SK-N-SH (cell line): ENCODE measurements at regions of chr1 and their contacts with region 1.

Region 1: GRCh38 chr1:110053557-110054428 is 16.7 kb downstream of the ALX3 start:
- DNase-seq: peak; percentile 71
- H3K4me3 ChIP-seq: no peak overlapping the region; a peak in 1 of 4 replicates
- H3K27ac ChIP-seq: peak overlapping the region in 1 of 2 experiments; percentile 93; a peak in 2 of 4 replicates
- H3K4me1 ChIP-seq: peaks cover 60 to 79% of the 10 kb centered on the region in 2 experiments
- H3K27me3 ChIP-seq: no peaks in the 10 kb centered on the region
- CTCF ChIP-seq: peak; percentile 96
- EP300 ChIP-seq: no peak
- RAD21 ChIP-seq: peak; percentile 98

Region 2: GRCh38 chr1:109739738-109740660 is 313.8 kb before region 1 on chr1:
- CTCF ChIA-PET with region 1: no interaction called
- POLR2A ChIA-PET with region 1: no interaction called
- DNase-seq: peak; percentile 96
- H3K4me3 ChIP-seq: peak overlapping the region; percentile 73 to 81
- H3K27ac ChIP-seq: peak overlapping the region in 1 of 2 experiments; percentile 80; a peak in 1 of 4 replicates
- H3K4me1 ChIP-seq: peaks cover 0 to 11% of the 10 kb centered on the region in 2 experiments; a peak in 2 of 4 replicates
- H3K27me3 ChIP-seq: no peaks in the 10 kb centered on the region
- CTCF ChIP-seq: no peak
- EP300 ChIP-seq: no peak
- RAD21 ChIP-seq: no peak

Region 3: GRCh38 chr1:110034451-110035235 is 19.1 kb before region 1 on chr1 and contains the start of gene STRIP1:
- CTCF ChIA-PET with region 1: interaction called, 29 read pairs
- POLR2A ChIA-PET with region 1: interaction called, 16 read pairs
- DNase-seq: peak; percentile 91
- H3K4me3 ChIP-seq: peak within 1 kb of the TSS; percentile 62 to 99
- H3K27ac ChIP-seq: peak within 1 kb of the TSS; percentile 89
- H3K4me1 ChIP-seq: peaks cover 4 to 9% of the 10 kb centered on the region in 2 experiments; a peak in 3 of 4 replicates
- H3K27me3 ChIP-seq: no peaks in the 10 kb centered on the region
- CTCF ChIP-seq: no peak
- EP300 ChIP-seq: no peak; a peak in 1 of 4 replicates
- RAD21 ChIP-seq: no peak
- polyA plus RNA-seq, gene STRIP1: 34.6 and 46.3 TPM in 2 replicates

Region 4: DNA sequence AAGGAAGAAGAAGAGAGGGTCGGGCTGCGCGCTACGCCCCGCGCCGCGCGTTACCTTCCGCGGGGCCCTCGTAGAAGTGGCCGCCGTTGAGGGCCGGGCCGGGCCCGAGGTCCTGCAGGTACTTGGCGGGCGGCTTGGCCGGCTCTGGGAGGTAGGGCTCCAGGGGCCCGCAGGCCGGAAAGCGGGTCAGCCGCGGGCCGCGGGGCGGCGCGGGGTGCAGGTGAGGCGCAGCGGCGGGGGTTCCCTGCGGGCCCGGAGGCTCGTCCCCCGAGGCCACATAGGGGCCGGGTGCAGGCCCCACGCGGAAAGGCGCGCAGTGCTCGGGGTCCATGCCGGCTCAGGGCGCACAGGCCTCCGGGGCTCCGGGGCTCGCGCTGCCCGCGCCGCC is 16.5 kb after region 1 on chr1:
- CTCF ChIA-PET with region 1: interaction called, 1,768 read pairs
- POLR2A ChIA-PET with region 1: interaction called, 4 read pairs
- DNase-seq: no peak
- H3K4me3 ChIP-seq: no peak overlapping the region
- H3K27ac ChIP-seq: no peak overlapping the region
- H3K4me1 ChIP-seq: peaks cover 0 to 12% of the 10 kb centered on the region in 2 experiments; a peak in 2 of 4 replicates
- H3K27me3 ChIP-seq: no peaks in the 10 kb centered on the region; the same call in 1 of the 2 replicates
- CTCF ChIP-seq: no peak
- EP300 ChIP-seq: no peak
- RAD21 ChIP-seq: no peak

Region 5: GRCh38 chr1:110161877-110162276 is 108.1 kb after region 1 on chr1:
- CTCF ChIA-PET with region 1: interaction called, 30 read pairs
- POLR2A ChIA-PET with region 1: no interaction called
- DNase-seq: no peak
- H3K4me3 ChIP-seq: no peak overlapping the region
- H3K27ac ChIP-seq: no peak overlapping the region
- H3K4me1 ChIP-seq: peaks cover 0 to 38% of the 10 kb centered on the region in 2 experiments; a peak in 2 of 4 replicates
- H3K27me3 ChIP-seq: no peaks in the 10 kb centered on the region; the same call in 1 of the 2 replicates
- CTCF ChIP-seq: no peak
- EP300 ChIP-seq: no peak
- RAD21 ChIP-seq: no peak

Region 6: DNA sequence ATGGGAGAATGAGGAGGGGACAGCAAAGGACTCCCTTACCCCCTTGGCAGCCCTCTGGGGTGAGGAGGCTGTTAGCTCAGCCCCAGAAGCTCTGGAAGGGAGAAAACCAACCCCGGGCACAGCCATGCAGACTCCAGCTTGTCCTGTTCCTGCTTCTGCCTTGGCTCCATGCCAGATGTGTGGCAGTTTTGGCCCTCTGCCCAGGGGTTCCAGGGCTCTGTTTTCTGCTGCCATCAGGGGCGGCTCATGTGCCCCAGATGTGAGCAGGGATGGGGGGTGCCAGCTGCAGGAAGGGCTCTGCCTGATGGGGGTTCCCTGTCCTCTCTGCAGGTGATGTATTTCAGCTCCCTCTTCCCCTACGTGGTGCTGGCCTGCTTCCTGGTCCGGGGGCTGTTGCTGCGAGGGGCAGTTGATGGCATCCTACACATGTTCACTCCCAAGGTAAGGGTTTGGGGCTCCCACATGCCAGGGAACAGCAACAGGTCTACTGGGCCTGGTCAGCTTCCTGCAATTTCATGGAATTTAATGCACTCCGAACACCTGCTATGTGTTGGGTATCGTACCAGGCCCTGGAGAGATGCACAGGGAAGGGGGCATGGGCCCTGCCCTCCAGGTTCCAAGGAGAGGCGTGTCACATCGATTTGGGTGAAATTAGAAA is 122.6 kb after region 1 on chr1:
- CTCF ChIA-PET with region 1: interaction called, 30 read pairs
- POLR2A ChIA-PET with region 1: interaction called, 5 read pairs
- DNase-seq: peak; percentile 86
- H3K4me3 ChIP-seq: no peak overlapping the region
- H3K27ac ChIP-seq: peak overlapping the region in 1 of 2 experiments; percentile 92; a peak in 2 of 4 replicates
- H3K4me1 ChIP-seq: peaks cover 0 to 62% of the 10 kb centered on the region in 2 experiments; a peak in 2 of 4 replicates
- H3K27me3 ChIP-seq: no peaks in the 10 kb centered on the region
- CTCF ChIP-seq: no peak
- EP300 ChIP-seq: peak in 1 of 2 experiments; percentile 90; a peak in 2 of 4 replicates
- RAD21 ChIP-seq: no peak; the same call in 1 of the 2 replicates

Region 7: GRCh38 chr1:110196917-110197765 is 143.3 kb after region 1 on chr1:
- CTCF ChIA-PET with region 1: interaction called, 38 read pairs
- POLR2A ChIA-PET with region 1: no interaction called
- DNase-seq: peak; percentile 89
- H3K4me3 ChIP-seq: peak overlapping the region in 1 of 2 experiments; percentile 11; a peak in 1 of 4 replicates
- H3K27ac ChIP-seq: no peak overlapping the region; a peak in 1 of 4 replicates
- H3K4me1 ChIP-seq: peaks cover 0 to 20% of the 10 kb centered on the region in 2 experiments; a peak in 1 of 4 replicates
- H3K27me3 ChIP-seq: no peaks in the 10 kb centered on the region
- CTCF ChIP-seq: peak; percentile 90
- EP300 ChIP-seq: no peak
- RAD21 ChIP-seq: peak; percentile 68

Region 8: DNA sequence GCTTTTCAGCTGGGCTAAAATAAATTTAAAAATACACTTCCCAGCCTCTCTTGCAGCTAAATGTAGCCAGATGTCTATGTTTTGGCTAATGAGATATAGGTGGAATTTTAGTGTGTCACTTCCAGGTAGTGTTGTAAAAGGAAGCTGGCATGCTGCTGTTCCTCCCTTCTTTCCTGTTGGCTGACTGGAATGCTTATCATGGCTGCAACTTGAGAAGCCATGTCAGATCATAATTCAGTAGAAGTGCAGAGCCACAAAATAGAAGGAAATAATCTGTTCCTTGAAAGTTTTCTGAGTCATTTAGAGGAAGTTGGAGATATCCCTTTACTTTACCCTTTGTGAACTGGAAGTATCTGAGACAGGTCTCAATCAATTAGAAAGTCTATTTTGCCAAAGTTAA is 274.5 kb after region 1 on chr1:
- CTCF ChIA-PET with region 1: no interaction called
- POLR2A ChIA-PET with region 1: no interaction called
- DNase-seq: no peak
- H3K4me3 ChIP-seq: no peak overlapping the region
- H3K27ac ChIP-seq: no peak overlapping the region
- H3K4me1 ChIP-seq: no peaks in the 10 kb centered on the region
- H3K27me3 ChIP-seq: no peaks in the 10 kb centered on the region
- CTCF ChIP-seq: no peak
- EP300 ChIP-seq: no peak
- RAD21 ChIP-seq: no peak